ENCODE measurements at regions of chrX and their contacts with region 1.

Region 1: DNA sequence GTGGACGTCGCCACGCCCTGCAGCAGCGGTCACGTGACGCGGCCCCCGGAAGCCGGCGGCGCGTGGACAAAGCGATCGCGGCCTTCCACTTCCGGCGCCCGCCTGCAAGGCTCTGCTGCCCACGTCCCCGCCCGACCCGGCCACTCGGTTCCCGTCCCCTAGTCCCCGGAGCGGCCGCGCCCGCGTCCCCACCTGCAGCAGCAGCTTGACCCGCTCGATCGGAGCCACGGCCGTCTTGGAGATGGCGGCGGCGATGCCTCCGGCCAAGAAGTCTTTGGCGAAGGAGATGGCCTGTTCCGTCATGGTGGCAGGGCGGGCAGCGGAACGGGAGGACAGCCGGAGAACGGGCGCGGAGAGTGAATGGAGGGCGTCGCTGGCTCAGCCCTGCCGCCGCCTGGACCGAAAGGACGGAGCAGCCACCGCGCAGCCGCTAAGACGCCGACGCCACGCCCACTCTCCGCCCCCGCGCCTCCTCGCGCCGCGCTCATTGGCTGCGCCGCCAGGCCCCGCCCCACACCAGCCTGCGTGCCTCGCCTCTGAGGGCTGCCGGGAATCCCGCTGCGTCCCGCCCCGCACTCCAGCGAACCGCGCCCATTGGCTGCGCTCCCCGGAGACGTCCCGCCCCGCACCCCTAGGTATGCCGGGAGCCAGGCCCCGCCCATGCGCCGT is at the start of gene SLC25A6:
- DNase-seq: peak; percentile 100
- total RNA-seq, gene SLC25A6: 147 TPM

Region 2: DNA sequence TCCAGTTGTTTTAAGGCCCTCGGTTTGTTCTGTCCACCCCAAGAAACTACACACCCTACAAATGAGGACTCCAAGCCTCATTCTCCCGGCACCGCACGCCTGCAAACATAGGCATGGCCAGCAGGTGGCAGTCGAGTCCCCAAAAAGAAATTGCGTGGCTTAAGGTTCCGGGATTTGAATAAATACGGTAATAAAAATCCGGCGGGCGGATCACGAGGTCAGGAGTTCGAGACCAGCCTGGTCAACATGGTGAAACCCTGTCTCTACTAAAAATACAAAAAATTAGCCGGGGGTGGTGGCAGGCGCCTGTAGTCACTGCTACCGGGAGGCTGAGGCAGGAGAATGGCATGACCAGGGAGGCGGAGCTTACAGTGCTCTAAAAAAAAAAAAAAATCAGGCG is 145.0 kb before region 1 on chrX:
- intact Hi-C with region 1: loop called (anchors 5 kb)
- DNase-seq: peak; percentile 85

Region 3: GRCh38 chrX:1453951-1454785 is 62.3 kb after region 1 on chrX:
- intact Hi-C with region 1: loop called (anchors 2 kb)
- DNase-seq: peak; percentile 93

Region 4: GRCh38 chrX:1468250-1468772 is 76.5 kb after region 1 on chrX:
- intact Hi-C with region 1: no loop called
- DNase-seq: no peak

Region 5: DNA sequence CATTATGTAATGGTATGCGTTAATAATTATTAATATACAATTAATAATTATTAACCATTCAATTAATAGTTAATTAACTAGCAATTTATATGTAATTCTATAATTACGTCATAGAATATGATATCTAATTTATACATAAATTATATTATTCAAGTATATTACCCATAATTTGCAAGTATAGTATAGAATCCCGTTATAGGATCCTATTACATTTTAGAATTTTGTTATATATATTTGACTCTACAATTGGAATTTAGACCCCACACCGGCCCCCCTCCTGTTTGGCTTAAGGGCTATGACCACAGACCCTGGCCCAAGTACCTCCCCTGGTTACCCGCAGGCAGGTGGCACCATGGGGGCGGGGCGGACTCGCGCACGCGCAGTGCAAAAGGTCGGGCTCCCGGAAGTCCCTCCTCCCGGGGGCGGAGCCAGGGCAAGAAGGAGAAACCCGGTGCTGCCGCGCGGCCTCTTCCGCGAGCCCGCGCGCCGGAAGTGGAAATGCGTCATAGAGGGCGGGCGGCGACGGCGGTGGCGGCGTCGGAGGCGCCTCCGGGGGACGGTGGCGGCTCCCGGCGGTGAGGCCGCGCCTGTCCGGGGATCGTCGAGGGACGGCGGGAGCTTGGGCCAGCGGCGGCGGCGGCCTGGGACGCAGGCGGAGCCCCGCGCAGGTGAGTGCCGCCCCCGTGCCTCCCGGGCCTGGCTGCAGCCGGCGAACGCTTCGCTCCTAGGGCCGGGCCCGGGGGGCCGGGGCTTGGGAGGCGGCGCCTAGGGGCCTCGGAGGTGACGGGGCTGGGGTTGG is 199.5 kb after region 1 on chrX and contains the start of gene AKAP17A:
- intact Hi-C with region 1: loop called (anchors 10 kb)
- DNase-seq: peak; percentile 98
- total RNA-seq, gene AKAP17A: 19.9 TPM

Region 6: GRCh38 chrX:1813809-1814208 is 422.0 kb after region 1 on chrX:
- intact Hi-C with region 1: no loop called
- DNase-seq: no peak

Region 7: GRCh38 chrX:2325076-2325784 is 933.4 kb after region 1 on chrX:
- intact Hi-C with region 1: loop called (anchors 10 kb)
- DNase-seq: peak; percentile 86

Measured in cardiac septum (tissue), 1 donor.